ENCODE measurements at regions of chr22 and their contacts with region 1.

Region 1: GRCh38 chr22:21917181-21917958 is 35.3 kb downstream of the PPM1F start:
- DNase-seq: no peak
- H3K4me3 ChIP-seq: no peak overlapping the region
- H3K27ac ChIP-seq: 0 out of 2 replicates have a peak overlapping the region, but pooled peaks have one; percentile 5
- H3K4me1 ChIP-seq: peaks cover 13 to 40% (median 30%) of the 10 kb centered on the region in 4 experiments
- H3K27me3 ChIP-seq: no peaks in the 10 kb centered on the region; a peak in 1 of 7 replicates
- CTCF ChIP-seq: no peak
- EP300 ChIP-seq: no peak
- POLR2A ChIP-seq: no peak
- RAD21 ChIP-seq: peak; percentile 15 to 28; a peak in 2 of 4 replicates

Region 2: GRCh38 chr22:21857481-21857914 is 59.9 kb before region 1 on chr22:
- CTCF ChIA-PET with region 1: no interaction called
- POLR2A ChIA-PET with region 1: no interaction called
- DNase-seq: no peak
- H3K4me3 ChIP-seq: no peak overlapping the region
- H3K27ac ChIP-seq: no peak overlapping the region
- H3K4me1 ChIP-seq: peaks cover 0 to 10% (median 9%) of the 10 kb centered on the region in 4 experiments; a peak in 6 of 7 replicates
- H3K27me3 ChIP-seq: no peaks in the 10 kb centered on the region
- CTCF ChIP-seq: no peak
- EP300 ChIP-seq: no peak
- POLR2A ChIP-seq: no peak
- RAD21 ChIP-seq: no peak

Region 3: DNA sequence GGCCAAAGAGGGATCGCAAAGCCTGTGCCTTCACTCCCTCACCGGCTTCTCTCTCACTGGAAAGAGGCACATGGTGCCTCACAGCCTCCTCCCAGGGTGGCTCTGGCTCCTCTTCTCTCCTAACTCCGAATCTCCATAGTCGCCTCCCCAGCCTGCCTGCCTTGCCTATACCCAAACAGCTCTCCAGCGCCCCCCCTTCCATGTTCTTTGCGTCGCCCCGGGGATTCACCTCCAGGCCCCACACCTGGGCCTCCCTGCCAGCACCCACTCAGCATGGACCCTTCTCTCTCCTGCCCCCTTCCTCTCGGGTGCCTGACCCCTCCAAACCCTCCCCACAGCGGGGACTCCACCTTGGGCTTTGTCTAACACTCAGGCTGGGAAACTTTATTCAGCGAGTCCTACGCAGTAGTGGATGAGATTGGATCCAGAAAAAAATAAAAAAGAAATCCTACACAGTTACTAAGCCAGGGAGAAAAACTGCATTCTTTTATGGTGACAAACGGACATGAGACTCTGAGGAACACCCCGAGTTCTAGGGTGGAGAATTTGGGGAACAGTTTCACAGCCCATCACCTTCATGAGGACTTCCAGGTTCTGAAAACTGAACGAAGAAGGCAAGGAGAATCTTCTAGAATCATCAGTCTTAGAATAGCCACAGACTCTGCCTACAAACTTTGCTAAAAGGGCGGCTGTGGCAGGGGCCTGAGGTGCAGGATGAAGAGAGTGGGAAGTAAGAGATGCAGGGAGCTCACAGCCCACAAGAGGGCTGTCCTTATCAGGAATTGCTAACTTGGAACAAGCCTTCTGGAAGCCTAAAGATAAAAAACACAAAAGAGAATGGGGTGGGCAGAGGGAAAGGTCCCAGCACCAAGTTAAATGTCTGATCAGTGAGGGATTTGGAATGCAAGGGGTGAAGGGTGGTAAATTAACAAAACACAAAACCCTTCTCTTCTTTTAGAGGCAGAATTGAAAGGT is 30.0 kb after region 1 on chr22:
- CTCF ChIA-PET with region 1: interaction called, 10 read pairs
- POLR2A ChIA-PET with region 1: interaction called, 3 read pairs
- DNase-seq: peak in 1 of 2 experiments; percentile 69
- H3K4me3 ChIP-seq: no peak overlapping the region
- H3K27ac ChIP-seq: 0 out of 2 replicates have a peak overlapping the region, but pooled peaks have one; percentile 16
- H3K4me1 ChIP-seq: peaks cover 0 to 13% (median 8%) of the 10 kb centered on the region in 4 experiments; a peak in 5 of 7 replicates
- H3K27me3 ChIP-seq: peaks cover 0 to 12% (median 3%) of the 10 kb centered on the region in 4 experiments; a peak in 2 of 7 replicates
- CTCF ChIP-seq: peak; percentile 31 to 50 (median 49)
- EP300 ChIP-seq: no peak
- POLR2A ChIP-seq: no peak
- RAD21 ChIP-seq: peak; percentile 36 to 47